ENCODE measurements at regions of chr1 and their contacts with region 1.

Region 1: GRCh38 chr1:204363335-204364124 is 3.8 kb upstream of the PLEKHA6 start:
- DNase-seq: peak; percentile 64
- H3K4me3 Mint-ChIP-seq: peak overlapping the region; percentile 71
- H3K27ac Mint-ChIP-seq: peak overlapping the region; percentile 82
- H3K4me1 Mint-ChIP-seq: peaks cover 48% of the 10 kb centered on the region
- H3K27me3 Mint-ChIP-seq: peaks cover 3% of the 10 kb centered on the region

Region 2: DNA sequence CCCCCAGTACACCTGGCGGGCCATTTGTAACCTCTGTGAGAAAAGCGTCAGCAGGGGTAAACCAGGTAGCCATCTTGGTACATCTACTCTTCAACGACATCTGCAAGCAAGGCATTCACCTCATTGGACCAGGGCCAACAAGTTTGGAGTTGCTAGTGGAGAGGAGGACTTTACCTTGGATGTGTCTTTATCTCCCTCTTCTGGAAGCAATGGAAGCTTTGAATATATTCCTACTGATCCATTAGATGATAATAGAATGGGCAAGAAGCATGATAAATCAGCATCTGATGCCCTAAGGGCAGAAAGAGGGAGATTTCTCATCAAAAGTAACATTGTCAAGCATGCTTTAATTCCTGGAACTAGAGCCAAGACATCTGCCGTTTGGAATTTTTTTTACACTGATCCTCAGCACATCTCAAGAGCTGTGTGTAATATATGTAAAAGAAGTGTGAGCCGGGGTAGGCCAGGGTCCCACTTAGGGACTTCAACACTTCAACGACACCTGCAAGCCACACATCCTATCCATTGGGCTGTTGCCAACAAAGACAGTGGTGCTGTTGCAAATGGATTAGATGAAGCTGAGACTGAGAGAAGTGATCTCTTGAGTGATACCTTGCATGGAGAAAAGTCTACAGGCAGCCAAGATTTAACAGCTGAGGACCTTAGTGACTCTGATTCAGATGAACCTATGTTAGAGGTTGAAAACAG is 565.4 kb before region 1 on chr1:
- intact Hi-C with region 1: no loop called
- DNase-seq: no peak
- H3K4me3 Mint-ChIP-seq: no peak overlapping the region
- H3K27ac Mint-ChIP-seq: no peak overlapping the region
- H3K4me1 Mint-ChIP-seq: peaks cover 51% of the 10 kb centered on the region
- H3K27me3 Mint-ChIP-seq: no peaks in the 10 kb centered on the region

Region 3: GRCh38 chr1:203861379-203862184 is 501.9 kb before region 1 on chr1 and contains the start of gene SNRPE:
- intact Hi-C with region 1: loop called (anchors 5 kb)
- DNase-seq: peak; percentile 96
- H3K4me3 Mint-ChIP-seq: peak within 1 kb of the TSS; percentile 100
- H3K27ac Mint-ChIP-seq: peak within 1 kb of the TSS; percentile 97
- H3K4me1 Mint-ChIP-seq: peaks cover 15% of the 10 kb centered on the region
- H3K27me3 Mint-ChIP-seq: no peaks in the 10 kb centered on the region
- total RNA-seq, gene SNRPE: 240 and 255 TPM in 2 replicates

Region 4: DNA sequence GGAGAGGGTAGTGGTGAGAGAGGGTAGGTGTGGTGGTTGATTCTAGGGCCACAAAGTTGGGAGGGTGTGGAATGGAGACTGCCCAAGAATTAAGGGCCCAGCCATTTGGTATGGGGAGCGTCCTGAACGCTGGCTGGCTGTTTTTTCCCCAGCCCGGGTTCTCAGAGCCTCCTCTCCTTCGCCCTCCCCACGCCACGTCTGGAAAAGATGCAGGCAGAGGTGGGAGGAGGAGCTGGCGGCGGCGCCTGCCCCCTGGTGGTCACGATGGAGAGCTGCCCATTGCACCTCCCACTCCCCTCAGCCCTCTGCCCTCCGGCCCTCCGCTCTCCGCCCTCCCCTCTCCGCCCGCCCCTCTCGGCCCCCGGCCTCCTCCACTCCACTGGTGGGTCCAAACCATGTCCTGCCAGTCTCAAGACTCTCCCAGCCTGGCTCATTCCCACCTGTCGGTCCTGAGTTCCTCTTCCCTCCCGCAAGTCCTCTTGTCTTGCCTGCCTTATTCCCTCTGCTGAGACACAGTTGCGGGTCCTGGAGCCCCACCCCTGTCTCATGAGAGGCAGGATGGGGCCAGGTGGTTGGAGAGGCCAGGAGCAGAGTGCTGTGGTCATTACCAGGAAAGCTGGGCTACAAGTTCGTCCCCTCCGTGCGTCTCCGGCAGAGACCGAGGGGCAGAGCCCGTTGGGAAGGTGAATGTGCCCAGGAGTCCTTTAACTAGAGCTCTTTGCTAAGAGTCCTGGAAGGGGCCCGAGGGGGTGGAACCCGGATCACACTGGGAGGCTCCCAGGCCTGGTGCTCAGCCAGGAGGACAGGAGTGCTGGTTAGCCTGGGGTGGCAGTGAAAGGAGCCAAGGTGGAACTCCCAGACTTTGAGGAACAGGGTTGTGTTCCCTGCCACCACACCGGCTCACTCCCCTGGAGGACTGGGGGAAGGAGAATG is 234.3 kb before region 1 on chr1:
- intact Hi-C with region 1: no loop called
- DNase-seq: peak; percentile 53
- H3K4me3 Mint-ChIP-seq: no peak overlapping the region
- H3K27ac Mint-ChIP-seq: no peak overlapping the region
- H3K4me1 Mint-ChIP-seq: peaks cover 9% of the 10 kb centered on the region
- H3K27me3 Mint-ChIP-seq: no peaks in the 10 kb centered on the region

Region 5: DNA sequence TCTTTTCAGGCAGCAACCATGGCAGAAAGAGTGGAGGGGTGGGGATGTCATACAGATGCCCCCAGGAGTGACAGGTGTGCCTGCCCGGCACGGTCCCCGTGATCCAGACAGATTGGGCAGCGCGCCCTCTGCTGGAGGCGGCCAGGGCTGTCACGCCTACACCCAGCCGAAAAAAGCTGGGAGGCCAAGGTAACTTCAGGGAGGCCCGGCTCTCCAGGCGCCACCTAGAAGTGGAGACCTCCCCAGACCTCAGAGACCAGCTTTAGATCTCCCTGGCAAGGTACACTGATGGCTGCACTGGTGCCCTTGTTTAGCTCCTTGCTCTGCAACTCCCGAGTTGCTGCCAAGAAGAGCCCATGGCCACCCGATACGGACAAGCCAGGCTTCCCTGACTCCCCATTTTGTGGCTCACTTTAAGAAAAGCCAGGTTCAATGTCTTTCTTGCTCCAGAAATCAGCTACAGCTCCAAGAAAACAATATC is 156.4 kb before region 1 on chr1:
- intact Hi-C with region 1: loop called (anchors 2 kb)
- DNase-seq: peak; percentile 54
- H3K4me3 Mint-ChIP-seq: no peak overlapping the region
- H3K27ac Mint-ChIP-seq: no peak overlapping the region
- H3K4me1 Mint-ChIP-seq: peaks cover 4% of the 10 kb centered on the region
- H3K27me3 Mint-ChIP-seq: peaks cover 30% of the 10 kb centered on the region

Region 6: DNA sequence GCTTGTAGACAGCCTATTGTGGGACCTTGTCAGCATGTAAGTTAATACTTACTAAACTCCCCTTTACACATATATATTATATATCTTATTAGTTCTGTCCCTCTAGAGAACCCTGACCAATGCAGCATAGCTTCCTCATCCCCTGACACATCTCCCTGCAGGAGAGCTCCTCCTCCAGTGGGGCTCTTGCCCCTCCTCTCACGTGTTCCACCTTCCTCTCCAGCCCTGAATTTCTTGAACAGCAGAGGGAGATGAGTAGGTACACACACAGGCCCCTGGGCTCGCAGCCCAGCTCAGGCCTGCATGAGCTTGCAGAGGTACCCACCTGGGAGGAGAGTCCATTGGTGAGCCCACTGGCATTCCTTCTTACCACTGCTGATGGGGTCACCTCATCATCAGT is 122.5 kb before region 1 on chr1:
- intact Hi-C with region 1: no loop called
- DNase-seq: no peak
- H3K4me3 Mint-ChIP-seq: no peak overlapping the region
- H3K27ac Mint-ChIP-seq: no peak overlapping the region
- H3K4me1 Mint-ChIP-seq: no peaks in the 10 kb centered on the region
- H3K27me3 Mint-ChIP-seq: peaks cover 3% of the 10 kb centered on the region

Region 7: DNA sequence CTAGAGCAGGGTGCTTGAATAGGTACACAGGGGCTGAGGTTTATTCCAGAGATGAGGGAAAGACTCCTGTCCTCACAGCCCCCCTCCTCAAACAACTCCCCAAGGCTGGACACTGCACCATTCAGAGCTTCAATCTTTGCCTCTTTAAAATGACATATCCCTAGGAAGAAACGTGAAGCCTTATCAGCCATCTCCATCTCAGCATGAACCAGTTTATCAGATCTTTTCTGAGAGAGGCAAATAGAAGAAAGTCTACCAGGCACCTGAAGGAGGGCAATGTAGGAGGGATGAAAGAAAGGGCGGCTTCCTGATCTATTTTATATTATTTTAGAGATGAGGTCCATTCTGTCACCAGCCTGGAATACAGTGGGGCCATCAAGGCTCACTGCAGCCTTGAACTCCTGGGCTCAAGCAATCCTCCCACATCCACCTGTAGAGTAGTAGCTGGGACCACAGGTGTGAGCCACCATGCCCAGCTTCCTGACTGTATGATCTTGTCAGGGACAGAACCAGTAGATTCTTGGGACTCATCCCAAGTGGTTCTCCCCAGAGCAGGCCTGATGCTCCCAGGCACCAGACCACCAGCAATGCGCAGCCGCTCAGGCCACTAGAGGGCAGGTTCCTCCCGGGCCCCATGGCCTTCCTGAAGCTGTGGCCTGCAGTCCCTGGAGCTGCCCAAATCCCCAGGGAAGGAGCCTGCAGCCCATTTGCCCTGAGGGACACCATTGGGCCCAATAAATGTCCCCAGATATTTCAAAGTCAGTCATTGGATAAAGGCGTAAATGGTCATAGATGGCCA is 105.4 kb before region 1 on chr1:
- intact Hi-C with region 1: loop called (anchors 1 kb)
- DNase-seq: peak; percentile 11
- H3K4me3 Mint-ChIP-seq: no peak overlapping the region
- H3K27ac Mint-ChIP-seq: no peak overlapping the region
- H3K4me1 Mint-ChIP-seq: peaks cover 5% of the 10 kb centered on the region
- H3K27me3 Mint-ChIP-seq: no peaks in the 10 kb centered on the region

Region 8: DNA sequence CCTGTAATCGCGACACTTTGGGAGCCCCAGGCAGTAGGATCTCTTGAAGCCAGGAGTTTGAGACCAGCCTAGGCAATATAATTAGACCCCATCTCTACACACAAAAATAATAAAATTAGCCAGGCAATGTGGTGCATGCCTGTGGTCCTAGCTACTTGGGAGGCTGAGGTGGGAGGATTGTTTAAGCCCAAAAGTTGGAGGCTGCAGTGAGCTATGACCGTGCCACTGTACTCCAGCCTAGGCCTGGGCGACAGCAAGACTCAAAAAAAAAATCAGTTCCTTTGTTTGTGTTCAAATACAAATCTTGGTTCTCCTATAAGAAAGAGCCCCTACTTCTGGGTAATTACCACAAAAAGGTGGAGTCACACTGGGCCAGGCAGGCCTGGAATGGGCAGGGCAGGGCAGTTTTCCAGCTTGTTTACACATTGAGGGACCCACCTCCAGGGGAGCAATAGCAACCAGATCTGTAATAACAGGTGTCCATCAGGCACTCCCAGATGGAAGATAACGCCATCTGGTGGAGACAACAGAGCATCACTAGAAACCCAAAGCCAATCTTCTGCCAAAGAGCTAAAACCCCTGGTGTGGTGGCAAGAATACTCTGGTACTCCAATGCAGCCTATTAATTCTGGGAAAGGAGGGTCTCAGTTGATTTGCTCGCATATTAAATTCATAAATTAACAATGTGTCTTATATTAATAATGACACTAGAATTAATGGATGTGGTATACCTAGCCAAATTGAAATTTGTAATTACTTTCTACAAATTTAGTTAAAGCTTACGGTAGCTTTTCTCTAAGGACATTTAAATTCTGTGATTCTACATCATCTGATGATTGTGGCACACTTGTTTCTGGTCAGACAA is 34.9 kb after region 1 on chr1:
- intact Hi-C with region 1: loop called (anchors 2 kb)
- DNase-seq: peak; percentile 50
- H3K4me3 Mint-ChIP-seq: no peak overlapping the region
- H3K27ac Mint-ChIP-seq: no peak overlapping the region
- H3K4me1 Mint-ChIP-seq: peaks cover 7% of the 10 kb centered on the region
- H3K27me3 Mint-ChIP-seq: no peaks in the 10 kb centered on the region